Sciatic nerve (tissue), 2 donors: ENCODE measurements at regions of chr4 and their contacts with region 1.

Region 1: GRCh38 chr4:170623897-170624296 is 534.1 kb upstream of the AADAT start:
- DNase-seq: no peak
- ATAC-seq: no peak

Region 2: DNA sequence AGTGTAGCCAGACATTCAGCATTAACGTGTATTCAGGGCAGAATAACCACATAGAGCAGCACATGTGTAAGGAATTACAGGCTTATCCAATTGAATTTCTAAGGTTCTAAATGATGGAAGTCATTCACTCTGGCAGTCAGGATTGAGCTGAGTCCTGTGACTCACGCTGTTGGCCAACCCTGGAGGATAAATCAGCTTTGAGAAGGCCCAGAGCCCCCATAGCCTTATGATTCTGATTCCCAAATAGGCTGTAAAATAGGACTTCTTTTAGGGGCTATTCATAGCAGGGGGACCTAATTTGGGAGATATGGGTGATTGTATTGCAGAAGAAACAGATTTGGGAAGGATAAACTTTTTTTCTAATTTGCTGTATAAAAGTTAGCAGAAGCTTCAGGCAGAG is 858.1 kb before region 1 on chr4:
- intact Hi-C with region 1: loop called (anchors 5 kb)
- DNase-seq: no peak
- ATAC-seq: no peak

Region 3: GRCh38 chr4:172404676-172405075 is 1780.8 kb after region 1 on chr4:
- intact Hi-C with region 1: no loop called
- DNase-seq: no peak
- ATAC-seq: no peak